GM10248 (cell line): ENCODE measurements at regions of chr15 and their contacts with region 1.

Region 1: GRCh38 chr15:63218100-63218808 is 28.8 kb downstream of the RAB8B start:
- DNase-seq: no peak
- CTCF ChIP-seq: no peak

Region 2: GRCh38 chr15:63234451-63234870 is 16.2 kb after region 1 on chr15:
- CTCF ChIA-PET with region 1: interaction called, 27 read pairs
- POLR2A ChIA-PET with region 1: no interaction called
- DNase-seq: no peak
- CTCF ChIP-seq: no peak

Region 3: GRCh38 chr15:63772520-63772919 is 554.3 kb after region 1 on chr15:
- CTCF ChIA-PET with region 1: no interaction called
- POLR2A ChIA-PET with region 1: no interaction called
- DNase-seq: no peak
- CTCF ChIP-seq: no peak